CD14-positive monocyte (primary cell): ENCODE measurements at regions of chr2 and their contacts with region 1.

Region 1: DNA sequence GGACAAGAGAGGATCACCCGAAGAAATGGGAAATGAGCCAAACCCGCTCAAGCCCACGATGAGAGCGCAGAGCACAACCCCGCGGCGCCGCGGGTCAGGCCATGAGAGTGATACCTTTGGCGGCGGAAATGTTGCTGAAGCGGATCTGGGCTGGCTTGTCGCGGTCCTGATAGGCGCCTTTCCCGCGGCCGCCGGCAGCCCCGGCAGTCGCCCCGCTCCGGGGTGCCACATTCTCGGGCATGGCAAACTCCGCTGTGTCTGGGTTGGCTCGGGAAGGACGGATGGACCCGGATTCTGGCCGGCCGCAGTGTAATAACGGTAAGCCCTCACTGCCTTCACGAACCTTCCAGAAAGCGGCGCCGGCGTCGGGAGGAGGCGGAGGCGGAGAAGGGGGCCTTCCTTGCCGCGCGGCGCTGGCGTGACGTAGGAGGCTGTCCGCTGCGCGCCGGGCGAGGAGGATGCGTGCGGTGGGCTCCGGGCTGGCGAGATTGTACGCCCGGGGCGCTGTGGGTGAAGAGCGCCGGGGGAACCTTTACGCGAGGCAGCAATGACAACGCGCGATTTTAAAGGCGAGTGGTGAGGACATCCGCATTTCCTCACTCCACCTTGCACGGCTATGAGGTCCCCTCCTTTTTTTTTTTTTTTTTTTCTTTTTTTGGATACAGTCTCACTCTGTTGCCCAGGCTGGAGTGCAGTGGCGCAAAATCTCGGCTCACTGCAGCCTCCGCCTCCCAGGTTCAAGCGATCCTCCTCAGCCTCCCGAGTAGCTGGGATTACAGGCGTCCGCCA is at the start of gene CCT4:
- DNase-seq: peak; percentile 66 to 86 (median 86)
- H3K4me3 ChIP-seq: peak within 1 kb of the TSS; percentile 78 to 94 (median 80)
- H3K4me3 Mint-ChIP-seq: peak within 1 kb of the TSS; percentile 98 to 99
- H3K27ac ChIP-seq: peak within 1 kb of the TSS; percentile 89 to 96
- H3K27ac Mint-ChIP-seq: peak within 1 kb of the TSS; percentile 98 to 100 (median 99)
- H3K4me1 ChIP-seq: peaks cover 12 to 19% of the 10 kb centered on the region in 2 donors
- H3K4me1 Mint-ChIP-seq: peaks cover 17% of the 10 kb centered on the region
- H3K27me3 ChIP-seq: no peaks in the 10 kb centered on the region
- H3K27me3 Mint-ChIP-seq: no peaks in the 10 kb centered on the region
- CTCF ChIP-seq: no peak
- polyA plus RNA-seq, gene CCT4: 26.1 to 78.1 (median 73.1) TPM

Region 2: DNA sequence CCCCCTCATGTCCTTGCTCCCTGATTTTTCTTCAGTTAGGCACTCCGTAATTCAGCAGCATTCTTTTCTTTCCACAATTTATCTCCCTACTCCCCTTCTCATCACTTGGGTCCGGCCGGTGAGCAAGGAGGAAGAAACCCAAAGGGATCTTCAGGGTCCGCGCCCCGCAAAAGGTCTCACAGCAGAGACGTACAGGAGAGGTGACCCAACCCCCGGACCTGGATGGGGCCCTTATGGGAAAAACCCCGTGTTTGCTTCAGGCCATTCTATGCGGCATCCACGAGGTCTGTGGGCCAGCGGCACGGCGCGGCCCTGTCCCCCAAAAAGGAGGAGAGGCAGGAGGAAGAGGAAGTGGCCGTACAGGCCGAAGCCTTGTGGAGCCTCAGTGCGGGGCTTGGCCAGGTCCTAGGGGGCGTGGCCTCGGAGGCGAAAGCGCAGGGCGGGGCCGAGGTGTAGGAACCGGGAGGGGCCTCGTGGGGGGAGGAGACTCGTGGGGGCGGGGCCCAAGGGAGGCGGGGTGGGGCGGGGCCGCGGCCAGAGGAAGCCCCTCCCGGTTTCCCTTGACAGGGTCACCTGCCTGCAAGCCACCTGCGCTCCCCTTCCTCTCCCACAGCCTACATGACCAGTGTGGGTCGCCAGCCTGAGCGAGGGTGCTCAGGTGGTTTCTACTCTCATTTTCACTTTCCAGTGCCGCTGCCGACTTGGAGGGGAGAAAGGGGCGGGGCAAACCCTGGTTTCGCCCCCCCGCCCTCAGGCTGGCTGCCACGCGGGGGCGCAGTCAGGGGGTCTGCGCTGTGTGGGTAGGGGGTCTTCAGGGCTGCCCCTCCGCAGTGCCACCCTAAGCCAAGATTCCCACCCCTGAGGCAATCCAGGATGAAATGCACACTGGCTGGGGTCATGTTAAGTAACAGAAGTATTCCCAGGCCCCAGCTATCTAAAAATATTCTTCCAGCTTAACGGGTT is 193.9 kb before region 1 on chr2:
- intact Hi-C with region 1: loop called in 1 of 2 experiments (anchors 10 kb)
- DNase-seq: peak; percentile 93 to 95 (median 94)
- H3K4me3 ChIP-seq: peak overlapping the region; percentile 70 to 99 (median 95)
- H3K4me3 Mint-ChIP-seq: peak overlapping the region; percentile 87 to 96
- H3K27ac ChIP-seq: peak overlapping the region; percentile 55 to 95
- H3K27ac Mint-ChIP-seq: peak overlapping the region; percentile 94 to 98 (median 97)
- H3K4me1 ChIP-seq: peaks cover 13 to 14% of the 10 kb centered on the region in 2 donors
- H3K4me1 Mint-ChIP-seq: peaks cover 16% of the 10 kb centered on the region
- H3K27me3 ChIP-seq: no peaks in the 10 kb centered on the region
- H3K27me3 Mint-ChIP-seq: peaks cover 0 to 2% (median 1%) of the 10 kb centered on the region in 3 donors
- CTCF ChIP-seq: no peak

Region 3: GRCh38 chr2:61704364-61704763 is 184.1 kb before region 1 on chr2:
- intact Hi-C with region 1: loop called (anchors 5 to 10 kb)
- DNase-seq: no peak
- H3K4me3 ChIP-seq: no peak overlapping the region
- H3K4me3 Mint-ChIP-seq: no peak overlapping the region
- H3K27ac ChIP-seq: no peak overlapping the region
- H3K27ac Mint-ChIP-seq: no peak overlapping the region
- H3K4me1 ChIP-seq: no peaks in the 10 kb centered on the region
- H3K4me1 Mint-ChIP-seq: peaks cover 2% of the 10 kb centered on the region
- H3K27me3 ChIP-seq: no peaks in the 10 kb centered on the region
- H3K27me3 Mint-ChIP-seq: peaks cover 0 to 1% (median 0%) of the 10 kb centered on the region in 3 donors
- CTCF ChIP-seq: no peak

Region 4: DNA sequence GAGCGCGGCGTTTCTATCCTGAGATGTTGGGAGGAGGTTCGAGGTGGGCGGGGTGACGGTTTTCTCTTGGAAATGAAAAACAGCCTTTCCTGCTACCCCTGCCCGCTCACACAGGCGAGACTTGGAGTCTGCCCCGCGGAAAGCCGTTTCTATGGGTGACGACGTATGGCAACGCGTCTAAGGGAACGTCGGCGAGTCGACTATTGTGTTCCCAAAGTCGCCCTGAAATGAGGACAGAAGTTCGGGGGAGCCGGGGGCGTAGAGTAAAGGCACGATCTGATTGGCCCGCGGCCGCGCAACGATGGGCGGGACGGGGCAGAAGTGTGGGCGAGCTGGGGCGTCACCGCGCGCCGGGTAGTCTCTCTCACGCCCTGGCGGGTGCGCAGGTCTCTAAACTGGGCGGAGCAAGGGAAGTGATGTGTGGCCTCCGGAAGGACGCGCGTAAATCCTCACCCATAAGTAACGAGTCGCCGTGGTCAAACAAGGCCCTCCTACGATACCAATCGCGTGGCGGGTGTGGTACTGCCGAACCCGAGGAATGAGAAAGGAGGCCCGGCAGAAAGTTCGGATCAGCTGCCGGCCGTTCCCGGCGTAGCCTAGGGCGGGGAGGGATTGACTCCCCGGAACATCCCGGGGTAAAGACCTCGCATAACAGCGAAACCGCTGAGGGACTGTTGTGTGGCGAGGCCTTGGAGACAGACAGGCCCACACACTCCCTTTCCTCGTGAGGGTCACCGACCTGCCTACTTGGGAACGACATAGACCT is 124.2 kb before region 1 on chr2:
- intact Hi-C with region 1: loop called in 1 of 2 experiments (anchors 10 kb)
- DNase-seq: peak; percentile 97 to 98 (median 98)
- H3K4me3 ChIP-seq: peak overlapping the region; percentile 50 to 83 (median 74)
- H3K4me3 Mint-ChIP-seq: peak overlapping the region; percentile 91 to 94
- H3K27ac ChIP-seq: peak overlapping the region; percentile 91 to 98
- H3K27ac Mint-ChIP-seq: peak overlapping the region; percentile 97 to 99 (median 98)
- H3K4me1 ChIP-seq: peaks cover 5 to 11% of the 10 kb centered on the region in 2 donors
- H3K4me1 Mint-ChIP-seq: peaks cover 6% of the 10 kb centered on the region
- H3K27me3 ChIP-seq: no peaks in the 10 kb centered on the region
- H3K27me3 Mint-ChIP-seq: peaks cover 0 to 8% (median 4%) of the 10 kb centered on the region in 3 donors
- CTCF ChIP-seq: no peak

Region 5: DNA sequence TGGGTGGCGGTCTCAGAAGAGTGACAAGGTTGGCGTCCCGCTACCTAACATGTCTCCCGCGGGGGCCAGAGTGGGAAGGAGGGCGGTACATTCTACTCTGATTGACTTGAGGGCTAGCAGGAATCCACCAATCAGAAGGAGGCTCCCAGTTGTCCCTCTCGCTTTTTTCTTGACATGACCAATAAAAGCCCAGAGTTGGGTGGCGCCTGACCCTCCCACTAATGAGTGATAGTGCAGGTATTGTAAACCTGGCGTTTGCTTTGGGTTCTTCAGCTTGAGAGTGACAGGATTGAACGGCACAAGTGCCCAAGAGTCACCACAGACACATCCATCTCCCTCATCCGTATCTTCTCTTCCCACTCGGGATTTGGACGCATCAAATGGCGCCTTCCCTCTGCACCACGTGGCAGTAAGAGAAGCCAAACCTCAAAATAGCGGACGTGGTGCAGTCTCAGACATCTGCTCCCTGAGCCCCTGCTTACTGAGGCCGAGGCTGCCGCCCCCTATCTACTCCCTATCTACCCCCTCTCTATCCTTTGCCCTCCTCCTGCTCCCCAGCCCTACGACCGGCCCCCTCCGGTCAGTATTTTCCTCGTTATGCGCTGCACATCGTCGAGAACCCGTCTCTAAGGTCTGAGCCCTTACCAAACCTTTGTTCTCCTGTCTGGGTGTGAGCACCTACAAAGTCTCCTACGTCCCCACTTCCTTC is 33.8 kb before region 1 on chr2:
- intact Hi-C with region 1: loop called in 1 of 2 experiments (anchors 2 kb)
- DNase-seq: peak; percentile 83 to 89 (median 89)
- H3K4me3 ChIP-seq: peak overlapping the region; percentile 80 to 97 (median 93)
- H3K4me3 Mint-ChIP-seq: peak overlapping the region; percentile 98
- H3K27ac ChIP-seq: peak overlapping the region; percentile 21 to 32
- H3K27ac Mint-ChIP-seq: peak overlapping the region; percentile 76 to 89 (median 83)
- H3K4me1 ChIP-seq: peaks cover 19 to 20% of the 10 kb centered on the region in 2 donors
- H3K4me1 Mint-ChIP-seq: peaks cover 22% of the 10 kb centered on the region
- H3K27me3 ChIP-seq: no peaks in the 10 kb centered on the region
- H3K27me3 Mint-ChIP-seq: no peaks in the 10 kb centered on the region
- CTCF ChIP-seq: no peak

Region 6: DNA sequence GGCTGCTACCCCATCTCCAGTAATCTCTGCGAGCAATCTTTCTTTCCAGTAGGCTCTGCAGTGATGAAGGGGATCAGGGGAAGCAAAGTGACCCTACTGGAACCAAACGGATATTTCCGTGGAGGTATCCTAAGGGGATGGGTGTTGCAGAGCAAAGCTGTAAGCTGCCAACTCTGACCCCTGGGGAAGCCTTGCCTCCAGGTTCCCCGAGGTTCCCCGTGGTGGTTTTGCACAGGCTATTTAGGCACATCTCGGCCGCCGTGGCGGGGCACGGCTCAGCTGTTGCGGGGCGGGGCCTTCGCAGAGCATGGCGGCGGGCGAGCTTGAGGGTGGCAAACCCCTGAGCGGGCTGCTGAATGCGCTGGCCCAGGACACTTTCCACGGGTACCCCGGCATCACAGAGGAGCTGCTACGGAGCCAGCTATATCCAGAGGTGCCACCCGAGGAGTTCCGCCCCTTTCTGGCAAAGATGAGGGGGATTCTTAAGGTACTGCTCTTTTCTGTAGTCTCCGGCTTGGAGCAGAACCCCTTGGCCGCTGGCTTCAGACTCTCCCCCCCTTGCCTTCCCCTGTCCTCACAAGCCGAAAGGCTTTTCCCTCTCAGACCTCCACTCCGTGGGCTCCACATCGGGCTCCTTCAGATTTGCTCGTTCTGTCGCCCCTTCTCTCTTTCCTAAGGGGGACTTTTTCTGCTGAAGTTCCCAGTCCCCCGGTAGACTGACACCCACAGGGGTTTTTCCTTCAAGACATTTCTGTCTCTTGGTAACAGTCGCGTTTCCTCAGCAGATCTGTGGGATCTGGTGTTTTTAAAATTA is 17.1 kb after region 1 on chr2 and contains the start of gene COMMD1:
- intact Hi-C with region 1: no loop called
- DNase-seq: peak; percentile 51 to 62 (median 59)
- H3K4me3 ChIP-seq: peak within 1 kb of the TSS; percentile 69 to 95 (median 75)
- H3K4me3 Mint-ChIP-seq: peak within 1 kb of the TSS; percentile 97 to 99
- H3K27ac ChIP-seq: peak within 1 kb of the TSS; percentile 6 to 89
- H3K27ac Mint-ChIP-seq: peak within 1 kb of the TSS; percentile 42 to 92 (median 88)
- H3K4me1 ChIP-seq: peaks cover 8 to 15% of the 10 kb centered on the region in 2 donors
- H3K4me1 Mint-ChIP-seq: peaks cover 15% of the 10 kb centered on the region
- H3K27me3 ChIP-seq: no peaks in the 10 kb centered on the region
- H3K27me3 Mint-ChIP-seq: peaks cover 0 to 2% (median 1%) of the 10 kb centered on the region in 3 donors
- CTCF ChIP-seq: no peak
- polyA plus RNA-seq, gene COMMD1: 25.2 to 82.1 (median 70.7) TPM

Region 7: GRCh38 chr2:62705007-62705829 is 816.8 kb after region 1 on chr2 and contains the start of gene EHBP1:
- intact Hi-C with region 1: loop called in 1 of 2 experiments (anchors 5 kb)
- DNase-seq: peak; percentile 96 to 99 (median 98)
- H3K4me3 ChIP-seq: peak within 1 kb of the TSS; percentile 61 to 83 (median 71)
- H3K4me3 Mint-ChIP-seq: peak within 1 kb of the TSS; percentile 92 to 95
- H3K27ac ChIP-seq: peak within 1 kb of the TSS; percentile 56 to 69
- H3K27ac Mint-ChIP-seq: peak within 1 kb of the TSS; percentile 82 to 94 (median 85)
- H3K4me1 ChIP-seq: peaks cover 17 to 20% of the 10 kb centered on the region in 2 donors
- H3K4me1 Mint-ChIP-seq: peaks cover 32% of the 10 kb centered on the region
- H3K27me3 ChIP-seq: no peaks in the 10 kb centered on the region
- H3K27me3 Mint-ChIP-seq: peaks cover 0 to 6% (median 3%) of the 10 kb centered on the region in 3 donors
- CTCF ChIP-seq: no peak
- polyA plus RNA-seq, gene EHBP1: 4.2 to 6.1 (median 6.0) TPM